Common myeloid progenitor, CD34-positive (primary cell): ENCODE measurements at regions of chr12 and their contacts with region 1.

Region 1: DNA sequence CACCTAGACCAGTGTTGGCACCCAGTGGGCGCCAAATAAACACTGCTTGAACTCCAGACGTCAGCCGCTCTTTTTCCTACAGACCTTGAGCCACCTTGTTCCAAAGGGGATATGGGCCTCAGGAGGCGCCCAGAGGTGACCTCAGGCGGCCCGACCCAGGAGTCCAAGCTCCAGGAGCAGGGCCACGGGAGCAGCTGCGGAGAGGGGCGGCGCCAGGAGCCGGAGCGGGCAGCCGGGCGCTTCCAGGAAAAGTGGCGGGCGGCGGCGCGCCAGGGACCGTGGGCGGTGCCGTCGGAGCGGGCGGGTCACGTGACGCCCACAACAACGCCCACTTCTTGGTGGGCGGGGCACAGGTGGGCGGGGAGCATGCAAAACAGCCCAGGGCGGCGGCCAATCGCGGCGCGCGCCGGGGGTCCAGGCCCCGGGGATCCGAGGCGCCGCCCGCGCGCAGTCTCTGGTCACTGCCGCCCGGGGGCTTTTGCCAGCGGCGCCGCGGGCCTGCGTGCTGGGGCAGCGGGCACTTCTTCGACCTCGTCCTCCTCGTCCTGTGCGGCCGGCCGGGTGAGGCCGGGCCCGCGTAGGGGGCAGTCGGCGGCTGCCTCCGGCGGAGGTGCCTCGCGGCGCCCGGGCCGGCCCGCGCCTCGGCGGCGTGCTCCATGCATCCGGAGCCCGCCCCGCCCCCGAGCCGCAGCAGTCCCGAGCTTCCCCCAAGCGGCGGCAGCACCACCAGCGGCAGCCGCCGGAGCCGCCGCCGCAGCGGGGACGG is at the start of gene ORAI1:
- DNase-seq: peak; percentile 92 to 95 (median 95)
- H3K4me3 ChIP-seq: peak within 1 kb of the TSS; percentile 73 to 94 (median 77)
- H3K27ac ChIP-seq: peak within 1 kb of the TSS; percentile 92 to 96
- H3K4me1 ChIP-seq: peaks cover 21 to 54% (median 49%) of the 10 kb centered on the region in 4 experiments
- H3K27me3 ChIP-seq: no peaks in the 10 kb centered on the region

Region 2: DNA sequence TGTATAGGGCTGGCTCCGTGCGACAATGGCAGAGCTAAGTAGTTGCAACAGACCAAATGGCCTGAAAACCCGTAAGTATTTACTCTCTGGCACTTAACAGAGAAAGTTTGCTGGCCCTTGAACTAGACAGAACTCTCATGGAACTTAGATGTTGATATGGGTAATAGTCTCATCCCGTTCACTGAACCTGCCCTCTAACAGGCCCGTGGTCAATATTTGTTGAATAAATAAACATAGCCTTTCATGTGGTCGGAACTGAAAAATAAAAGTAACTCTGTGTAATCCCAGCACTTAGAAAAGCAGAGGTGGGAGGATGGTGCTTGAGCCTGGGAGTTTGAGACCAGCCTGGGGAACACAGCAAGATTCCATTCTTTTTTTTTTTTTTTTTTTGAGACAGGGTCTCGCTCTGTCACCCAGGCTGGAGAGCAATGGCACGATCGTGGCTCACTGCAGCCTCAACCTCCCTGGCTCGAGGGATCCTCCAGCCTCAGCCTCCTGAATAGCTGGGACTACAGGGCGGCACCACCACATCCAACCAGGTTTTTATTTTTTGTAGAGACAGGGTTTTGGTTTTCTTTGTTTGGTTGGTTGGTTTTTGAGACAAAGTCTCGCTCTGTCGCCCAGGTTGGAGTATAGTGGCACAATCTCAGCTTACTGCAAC is 75.2 kb before region 1 on chr12:
- CTCF ChIA-PET with region 1: interaction called, 94 read pairs
- POLR2A ChIA-PET with region 1: interaction called, 5 read pairs
- DNase-seq: no peak
- H3K4me3 ChIP-seq: no peak overlapping the region
- H3K27ac ChIP-seq: no peak overlapping the region
- H3K4me1 ChIP-seq: peaks cover 0 to 13% (median 8%) of the 10 kb centered on the region in 4 experiments
- H3K27me3 ChIP-seq: no peaks in the 10 kb centered on the region

Region 3: DNA sequence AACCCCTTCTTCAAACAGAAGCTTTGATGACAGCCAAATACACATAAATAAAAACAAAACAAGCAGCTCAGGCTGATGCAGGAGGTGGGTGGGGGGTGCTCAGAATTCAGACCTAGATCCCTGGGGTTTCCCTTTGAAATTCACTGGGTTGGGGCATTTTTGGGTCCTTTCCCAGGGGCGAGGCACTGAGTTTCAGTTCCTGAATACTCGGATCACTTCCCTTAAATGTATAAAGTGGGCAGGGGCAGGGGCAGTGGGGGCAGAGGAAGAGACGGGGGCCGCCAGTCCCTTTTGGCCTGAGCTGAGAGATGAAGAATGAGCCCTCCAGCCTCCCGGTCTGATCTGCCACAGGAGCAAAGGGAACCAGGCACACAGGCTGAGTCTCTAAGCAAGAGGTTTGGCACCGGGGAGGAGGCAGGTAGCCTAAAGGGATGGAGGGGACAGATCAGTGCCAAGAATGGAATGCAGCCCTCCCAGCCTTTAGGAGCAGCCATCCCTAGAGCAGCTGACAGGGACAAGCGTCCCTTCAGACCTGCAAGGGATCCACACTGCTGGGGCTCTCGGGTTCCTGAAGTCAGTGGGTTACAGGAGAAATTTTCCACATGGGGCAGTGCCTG is 65.8 kb before region 1 on chr12:
- CTCF ChIA-PET with region 1: interaction called, 94 read pairs
- POLR2A ChIA-PET with region 1: no interaction called
- DNase-seq: peak in 1 of 3 donors; percentile 27
- H3K4me3 ChIP-seq: no peak overlapping the region
- H3K27ac ChIP-seq: no peak overlapping the region
- H3K4me1 ChIP-seq: no peaks in the 10 kb centered on the region
- H3K27me3 ChIP-seq: no peaks in the 10 kb centered on the region

Region 4: DNA sequence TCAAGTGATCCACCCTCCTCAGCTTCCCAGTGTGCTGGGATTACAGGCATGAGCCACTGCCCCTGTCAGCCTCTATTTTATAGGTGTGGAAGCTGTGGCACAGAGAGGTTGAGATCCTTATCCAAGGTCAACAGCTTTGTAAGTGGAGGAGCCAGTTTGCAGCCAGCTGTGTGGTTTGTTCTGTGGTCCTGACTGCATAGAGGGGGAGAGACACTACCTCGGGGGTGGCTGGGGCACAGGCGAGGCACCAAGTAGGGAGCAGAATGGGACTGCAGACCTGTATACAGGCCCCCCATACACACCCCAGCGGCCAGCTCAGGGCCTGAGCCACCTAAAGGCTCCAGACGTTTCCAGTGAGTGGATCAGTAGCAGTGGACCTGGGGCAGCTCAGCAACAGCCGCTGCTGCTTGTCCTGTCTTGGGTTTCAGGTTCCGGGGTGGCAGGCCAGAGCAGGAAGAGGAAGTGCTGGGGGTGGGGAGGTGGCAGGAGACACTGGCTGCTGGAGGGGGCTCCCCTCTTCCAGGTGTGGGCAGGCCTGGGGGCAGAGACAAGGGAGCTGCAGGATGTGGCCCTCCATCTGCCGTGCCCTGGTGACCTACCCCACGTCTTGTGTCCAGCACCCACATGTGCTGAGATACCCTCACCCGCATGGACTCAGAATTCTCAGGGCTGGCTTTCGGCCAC is 11.1 kb after region 1 on chr12:
- CTCF ChIA-PET with region 1: interaction called, 25 read pairs
- POLR2A ChIA-PET with region 1: interaction called, 7 read pairs
- DNase-seq: peak in 2 of 3 donors; percentile 24 to 55
- H3K4me3 ChIP-seq: peak overlapping the region in 3 of 7 experiments; percentile 4 to 50 (median 9)
- H3K27ac ChIP-seq: peak overlapping the region; percentile 40 to 71
- H3K4me1 ChIP-seq: peaks cover 2 to 55% (median 35%) of the 10 kb centered on the region in 4 experiments
- H3K27me3 ChIP-seq: no peaks in the 10 kb centered on the region

Region 5: DNA sequence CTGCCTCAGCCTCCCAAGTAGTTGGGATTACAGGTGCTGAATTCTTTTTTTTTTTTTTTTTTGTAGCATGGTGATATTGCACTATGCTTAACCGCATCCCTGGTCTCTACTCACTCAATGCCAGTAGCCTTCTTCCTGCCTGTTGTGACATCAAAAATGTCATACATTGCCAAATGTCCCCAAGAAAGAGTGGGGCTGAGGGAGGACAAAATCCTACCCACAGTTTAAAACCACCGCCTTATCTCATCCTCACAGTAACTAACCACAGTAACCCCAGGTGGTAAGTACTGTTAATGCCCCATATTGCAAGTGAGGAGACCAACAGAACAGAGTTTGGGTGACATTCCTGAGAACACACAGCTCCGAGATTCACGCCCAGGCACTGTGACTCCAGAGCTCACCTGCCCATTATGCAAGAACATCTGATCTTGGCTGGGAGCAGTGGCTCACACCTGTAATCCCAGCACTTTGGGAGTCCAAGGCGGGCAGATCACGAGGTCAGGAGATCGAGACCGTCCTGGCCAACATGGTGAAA is 23.6 kb after region 1 on chr12:
- CTCF ChIA-PET with region 1: interaction called, 37 read pairs
- POLR2A ChIA-PET with region 1: interaction called, 8 read pairs
- DNase-seq: peak; percentile 96 to 99 (median 99)
- H3K4me3 ChIP-seq: no peak overlapping the region
- H3K27ac ChIP-seq: no peak overlapping the region
- H3K4me1 ChIP-seq: peaks cover 5 to 55% (median 30%) of the 10 kb centered on the region in 4 experiments
- H3K27me3 ChIP-seq: no peaks in the 10 kb centered on the region

Region 6: GRCh38 chr12:121657305-121658008 is 31.2 kb after region 1 on chr12:
- CTCF ChIA-PET with region 1: interaction called, 174 read pairs
- POLR2A ChIA-PET with region 1: interaction called, 5 read pairs
- DNase-seq: no peak
- H3K4me3 ChIP-seq: no peak overlapping the region
- H3K27ac ChIP-seq: peak overlapping the region in 1 of 2 experiments; percentile 43
- H3K4me1 ChIP-seq: peaks cover 0 to 62% (median 53%) of the 10 kb centered on the region in 4 experiments
- H3K27me3 ChIP-seq: no peaks in the 10 kb centered on the region

Region 7: DNA sequence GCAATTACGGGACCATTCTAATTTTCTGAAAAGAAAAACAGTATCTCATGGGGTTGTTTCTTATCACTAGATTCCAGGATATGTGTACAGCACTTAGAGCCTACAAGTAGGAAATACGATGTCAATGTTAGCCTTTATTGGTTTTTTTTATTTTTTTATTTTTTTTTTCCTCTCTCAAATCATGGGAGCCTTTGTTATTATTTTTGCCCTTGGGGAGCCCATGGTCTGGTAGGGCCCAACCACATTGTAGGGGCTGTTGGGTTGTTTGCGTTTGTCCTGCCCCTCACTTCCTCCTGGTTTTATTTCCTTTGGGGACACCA is 37.3 kb after region 1 on chr12:
- CTCF ChIA-PET with region 1: interaction called, 174 read pairs
- POLR2A ChIA-PET with region 1: interaction called, 15 read pairs
- DNase-seq: no peak
- H3K4me3 ChIP-seq: peak overlapping the region in 4 of 7 experiments; percentile 76 to 97 (median 87)
- H3K27ac ChIP-seq: peak overlapping the region in 1 of 2 experiments; percentile 43
- H3K4me1 ChIP-seq: peaks cover 5 to 79% (median 64%) of the 10 kb centered on the region in 4 experiments
- H3K27me3 ChIP-seq: no peaks in the 10 kb centered on the region

Region 8: DNA sequence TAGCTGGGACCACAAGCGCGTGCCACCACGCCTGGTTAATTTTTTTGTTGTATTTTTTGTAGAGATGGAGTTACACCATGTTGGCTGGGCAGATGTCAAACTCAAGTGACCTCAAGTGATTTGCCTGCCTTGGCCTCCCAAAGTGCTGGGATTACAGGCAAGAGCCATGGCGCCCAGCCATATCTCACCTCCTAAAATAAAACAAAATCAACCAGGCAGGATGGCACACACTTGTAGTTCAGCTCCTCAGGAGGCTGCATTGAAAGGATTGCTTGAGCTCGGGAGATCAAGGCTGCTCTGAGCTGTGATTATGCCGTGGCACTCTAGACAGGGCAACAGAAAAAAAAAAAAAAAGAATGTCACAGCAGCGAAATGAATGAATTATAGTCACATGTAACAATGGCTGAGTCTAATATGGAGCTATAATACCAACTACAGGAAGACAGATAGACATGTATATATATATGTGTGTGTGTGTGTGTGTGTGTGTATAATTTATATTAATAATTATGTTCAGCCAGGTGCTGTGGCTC is 67.0 kb after region 1 on chr12:
- CTCF ChIA-PET with region 1: no interaction called
- POLR2A ChIA-PET with region 1: no interaction called
- DNase-seq: no peak
- H3K4me3 ChIP-seq: no peak overlapping the region
- H3K27ac ChIP-seq: no peak overlapping the region
- H3K4me1 ChIP-seq: peaks cover 0 to 3% (median 0%) of the 10 kb centered on the region in 4 experiments
- H3K27me3 ChIP-seq: no peaks in the 10 kb centered on the region